ENCODE measurements at regions of chr4 and their contacts with region 1.

Region 1: DNA sequence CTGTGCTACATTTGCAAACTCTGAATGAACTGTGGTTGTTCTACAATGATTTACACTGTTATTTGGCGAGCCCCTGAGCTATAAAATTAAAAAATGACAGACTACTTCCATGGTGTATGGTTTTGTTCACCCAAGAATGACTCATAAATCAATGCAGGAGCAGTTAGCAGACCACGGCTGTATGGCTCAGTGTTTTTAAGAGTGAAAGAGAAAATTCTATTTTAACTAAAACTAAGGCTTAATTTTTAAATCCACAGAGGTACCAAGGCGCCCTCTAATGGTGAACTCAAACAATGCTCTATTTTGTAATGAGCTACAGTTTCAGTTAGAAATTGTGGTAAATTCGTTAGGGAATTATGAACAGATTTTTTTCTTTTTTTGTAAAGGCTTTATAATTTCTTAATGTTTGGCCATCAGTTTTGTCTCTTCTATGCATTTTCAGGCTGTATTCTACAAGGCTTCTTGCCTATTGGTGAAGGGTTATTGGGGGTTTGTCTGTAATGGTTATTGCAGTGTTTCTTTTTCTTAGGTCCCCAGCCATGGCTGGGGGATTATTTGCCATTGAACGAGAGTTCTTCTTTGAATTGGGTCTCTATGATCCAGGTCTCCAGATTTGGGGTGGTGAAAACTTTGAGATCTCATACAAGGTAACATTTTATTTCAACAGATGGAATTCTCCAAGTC is 32.5 kb downstream of the HMGB2 start:
- DNase-seq: no peak
- H3K4me3 Mint-ChIP-seq: no peak overlapping the region
- H3K27ac Mint-ChIP-seq: no peak overlapping the region
- H3K4me1 Mint-ChIP-seq: peaks cover 3% of the 10 kb centered on the region
- H3K27me3 Mint-ChIP-seq: no peaks in the 10 kb centered on the region

Region 2: DNA sequence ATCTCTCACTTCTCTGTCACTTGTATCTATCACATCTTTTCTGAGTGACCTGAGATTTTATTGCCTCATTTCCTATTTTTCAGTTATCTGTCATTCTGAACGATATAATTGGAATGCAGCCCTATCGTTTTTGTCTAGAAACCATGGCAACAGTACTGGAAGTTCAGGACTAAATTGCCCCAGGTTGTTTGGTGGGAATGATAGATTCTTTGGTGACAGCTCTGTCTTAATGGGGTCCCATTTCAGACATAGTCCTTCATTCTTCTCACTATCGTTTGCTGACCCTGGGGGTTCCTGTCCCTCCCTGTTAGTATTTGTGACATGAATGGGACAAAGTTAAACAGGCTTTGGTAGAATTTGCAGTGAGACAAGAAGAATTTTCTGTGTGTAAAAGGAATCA is 400.7 kb before region 1 on chr4:
- CTCF ChIA-PET with region 1: no interaction called
- POLR2A ChIA-PET with region 1: no interaction called
- DNase-seq: no peak
- H3K4me3 Mint-ChIP-seq: no peak overlapping the region
- H3K27ac Mint-ChIP-seq: no peak overlapping the region
- H3K4me1 Mint-ChIP-seq: no peaks in the 10 kb centered on the region
- H3K27me3 Mint-ChIP-seq: peaks cover 3% of the 10 kb centered on the region

Region 3: GRCh38 chr4:173013232-173013930 is 288.3 kb before region 1 on chr4:
- CTCF ChIA-PET with region 1: interaction called, 89 read pairs
- POLR2A ChIA-PET with region 1: interaction called, 11 read pairs
- DNase-seq: peak; percentile 46
- H3K4me3 Mint-ChIP-seq: no peak overlapping the region
- H3K27ac Mint-ChIP-seq: no peak overlapping the region
- H3K4me1 Mint-ChIP-seq: peaks cover 3% of the 10 kb centered on the region
- H3K27me3 Mint-ChIP-seq: peaks cover 7% of the 10 kb centered on the region

Region 4: GRCh38 chr4:173273941-173274340 is 27.7 kb before region 1 on chr4:
- CTCF ChIA-PET with region 1: interaction called, 10 read pairs
- POLR2A ChIA-PET with region 1: no interaction called
- DNase-seq: no peak
- H3K4me3 Mint-ChIP-seq: no peak overlapping the region
- H3K27ac Mint-ChIP-seq: no peak overlapping the region
- H3K4me1 Mint-ChIP-seq: no peaks in the 10 kb centered on the region
- H3K27me3 Mint-ChIP-seq: no peaks in the 10 kb centered on the region

Region 5: GRCh38 chr4:173318648-173319211 is 17.1 kb after region 1 on chr4:
- CTCF ChIA-PET with region 1: interaction called, 44 read pairs
- POLR2A ChIA-PET with region 1: interaction called, 4 read pairs
- DNase-seq: no peak
- H3K4me3 Mint-ChIP-seq: no peak overlapping the region
- H3K27ac Mint-ChIP-seq: no peak overlapping the region
- H3K4me1 Mint-ChIP-seq: peaks cover 8% of the 10 kb centered on the region
- H3K27me3 Mint-ChIP-seq: no peaks in the 10 kb centered on the region

Region 6: DNA sequence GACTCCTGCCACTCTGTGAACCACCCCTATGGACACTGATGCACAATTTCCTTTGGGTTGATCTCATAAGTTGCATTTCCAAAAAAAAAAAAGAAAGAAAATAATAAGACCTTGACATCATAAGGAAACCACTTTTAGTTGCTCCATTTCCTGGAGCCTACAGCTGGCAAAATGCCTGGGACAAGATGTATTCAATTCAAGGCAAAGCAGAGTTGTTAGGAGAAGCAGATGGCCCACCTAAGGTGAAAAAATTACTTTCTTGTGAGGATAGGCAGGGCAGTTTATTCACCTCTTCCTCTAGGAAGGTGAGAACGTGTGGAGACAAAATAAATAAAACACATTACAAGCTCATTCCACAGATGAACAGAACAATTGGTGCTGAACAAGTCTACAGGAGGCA is 111.4 kb after region 1 on chr4:
- CTCF ChIA-PET with region 1: interaction called, 17 read pairs
- POLR2A ChIA-PET with region 1: no interaction called
- DNase-seq: no peak
- H3K4me3 Mint-ChIP-seq: no peak overlapping the region
- H3K27ac Mint-ChIP-seq: no peak overlapping the region
- H3K4me1 Mint-ChIP-seq: peaks cover 4% of the 10 kb centered on the region
- H3K27me3 Mint-ChIP-seq: no peaks in the 10 kb centered on the region

Measured in activated CD4-positive, alpha-beta memory T cell treated with anti-CD3 and anti-CD28 coated beads, Interleukin-2, amount 10 ng/mL, durations not matched to agents 7 days and 5 days (primary cell).